Left cardiac atrium (tissue), 4 donors: ENCODE measurements at regions of chr16 and their contacts with region 1.

Region 1: GRCh38 chr16:48225456-48225855 is 18.6 kb upstream of the LONP2 start:
- DNase-seq: no peak
- ATAC-seq: no peak

Region 2: GRCh38 chr16:48632137-48632774 is 406.8 kb after region 1 on chr16:
- intact Hi-C with region 1: loop called in 1 of 2 experiments (anchors 10 kb)
- DNase-seq: no peak
- ATAC-seq: no peak